ENCODE measurements at regions of chr5 and their contacts with region 1.

Region 1: DNA sequence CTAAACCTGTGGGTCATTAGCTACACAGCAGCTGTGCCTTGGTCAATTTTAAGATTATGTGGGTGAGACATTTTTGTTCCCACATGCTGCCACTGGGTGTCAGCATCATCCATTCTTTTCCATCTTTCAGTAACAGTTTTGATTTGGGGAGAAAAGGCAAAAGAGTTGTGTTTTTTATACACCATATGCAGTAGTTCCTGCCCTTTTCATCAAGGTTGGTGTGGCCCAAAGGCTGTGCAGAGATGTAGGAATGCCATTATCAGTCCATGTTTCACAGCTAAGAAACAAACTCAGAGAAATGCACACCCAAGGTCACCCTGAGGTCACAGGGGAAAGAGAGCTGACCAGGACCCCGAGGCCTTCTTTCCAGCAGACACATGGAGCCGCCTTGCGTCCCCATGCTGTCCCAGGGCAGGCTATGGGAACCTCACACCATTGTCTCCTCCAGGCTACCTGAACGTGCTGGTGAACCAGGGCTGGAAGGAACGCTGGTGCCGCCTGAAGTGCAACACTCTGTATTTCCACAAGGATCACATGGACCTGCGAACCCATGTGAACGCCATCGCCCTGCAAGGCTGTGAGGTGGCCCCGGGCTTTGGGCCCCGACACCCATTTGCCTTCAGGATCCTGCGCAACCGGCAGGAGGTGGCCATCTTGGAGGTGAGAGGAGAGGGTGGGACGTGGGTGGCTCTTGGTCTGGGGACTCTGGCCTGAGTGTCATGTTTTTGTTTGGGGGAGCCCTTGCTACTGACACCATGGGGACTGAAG is 27.8 kb upstream of the GRPEL2 start:
- DNase-seq: peak in 4 of 5 donors; percentile 52 to 66 (median 56)
- H3K4me3 ChIP-seq: no peak overlapping the region
- H3K4me3 Mint-ChIP-seq: no peak overlapping the region
- H3K27ac ChIP-seq: no peak overlapping the region
- H3K27ac Mint-ChIP-seq: no peak overlapping the region
- H3K4me1 ChIP-seq: no peaks in the 10 kb centered on the region
- H3K4me1 Mint-ChIP-seq: peaks cover 0 to 3% (median 1%) of the 10 kb centered on the region in 4 donors
- H3K27me3 ChIP-seq: no peaks in the 10 kb centered on the region
- H3K27me3 Mint-ChIP-seq: no peaks in the 10 kb centered on the region

Region 2: GRCh38 chr5:149357370-149358293 is 40.2 kb after region 1 on chr5 and contains the start of gene PCYOX1L:
- CTCF ChIA-PET with region 1: interaction called, 564 read pairs
- POLR2A ChIA-PET with region 1: interaction called, 5 read pairs
- intact Hi-C with region 1: no loop called
- DNase-seq: peak; percentile 91 to 97 (median 95)
- H3K4me3 ChIP-seq: peak within 1 kb of the TSS; percentile 70 to 82
- H3K4me3 Mint-ChIP-seq: peak within 1 kb of the TSS; percentile 94 to 98 (median 95)
- H3K27ac ChIP-seq: peak within 1 kb of the TSS; percentile 75
- H3K27ac Mint-ChIP-seq: peak within 1 kb of the TSS; percentile 92 to 98 (median 96)
- H3K4me1 ChIP-seq: peaks cover 71% of the 10 kb centered on the region
- H3K4me1 Mint-ChIP-seq: peaks cover 46 to 83% (median 63%) of the 10 kb centered on the region in 4 donors
- H3K27me3 ChIP-seq: no peaks in the 10 kb centered on the region
- H3K27me3 Mint-ChIP-seq: no peaks in the 10 kb centered on the region
- total RNA-seq, gene PCYOX1L: 40.4 to 43.9 TPM

Region 3: DNA sequence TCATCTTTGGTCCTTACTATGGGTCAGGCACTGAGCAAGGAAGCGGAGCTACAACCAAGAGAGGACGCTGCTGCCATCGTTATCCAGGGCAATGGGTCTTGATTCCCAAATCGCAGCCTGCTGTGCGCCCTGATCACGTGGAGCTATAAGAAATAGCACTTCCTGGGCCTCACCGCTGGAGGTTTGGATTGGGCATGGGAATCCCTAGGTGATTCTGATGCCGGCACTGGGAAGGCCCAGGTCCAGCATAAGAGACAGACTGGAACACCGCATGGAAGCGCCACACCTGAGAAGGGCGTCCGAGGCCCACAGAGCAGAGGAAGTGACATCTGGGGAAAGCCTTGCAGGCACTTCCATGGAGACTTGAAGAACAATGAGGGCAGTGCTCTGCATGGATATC is 58.6 kb after region 1 on chr5:
- CTCF ChIA-PET with region 1: interaction called, 564 read pairs
- POLR2A ChIA-PET with region 1: interaction called, 5 read pairs
- intact Hi-C with region 1: loop called (anchors 1 kb)
- DNase-seq: no peak
- H3K4me3 ChIP-seq: no peak overlapping the region
- H3K4me3 Mint-ChIP-seq: no peak overlapping the region
- H3K27ac ChIP-seq: no peak overlapping the region
- H3K27ac Mint-ChIP-seq: peak overlapping the region in 1 of 7 donors; percentile 11
- H3K4me1 ChIP-seq: no peaks in the 10 kb centered on the region
- H3K4me1 Mint-ChIP-seq: peaks cover 3 to 6% (median 5%) of the 10 kb centered on the region in 4 donors
- H3K27me3 ChIP-seq: no peaks in the 10 kb centered on the region
- H3K27me3 Mint-ChIP-seq: peaks cover 0 to 2% of the 10 kb centered on the region in 2 donors

Region 4: GRCh38 chr5:149381987-149382340 is 64.5 kb after region 1 on chr5:
- CTCF ChIA-PET with region 1: interaction called, 20 read pairs
- POLR2A ChIA-PET with region 1: no interaction called
- intact Hi-C with region 1: no loop called
- DNase-seq: peak; percentile 50 to 56 (median 54)
- H3K4me3 ChIP-seq: no peak overlapping the region
- H3K4me3 Mint-ChIP-seq: no peak overlapping the region
- H3K27ac ChIP-seq: no peak overlapping the region
- H3K27ac Mint-ChIP-seq: peak overlapping the region in 3 of 7 donors; percentile 43 to 58 (median 53)
- H3K4me1 ChIP-seq: no peaks in the 10 kb centered on the region
- H3K4me1 Mint-ChIP-seq: peaks cover 0 to 4% (median 1%) of the 10 kb centered on the region in 4 donors
- H3K27me3 ChIP-seq: no peaks in the 10 kb centered on the region
- H3K27me3 Mint-ChIP-seq: peaks cover 3 to 4% of the 10 kb centered on the region in 2 donors

Region 5: GRCh38 chr5:149434162-149435014 is 116.9 kb after region 1 on chr5:
- CTCF ChIA-PET with region 1: interaction called, 71 read pairs
- POLR2A ChIA-PET with region 1: no interaction called
- intact Hi-C with region 1: loop called (anchors 1 kb)
- DNase-seq: peak in 4 of 5 donors; percentile 34 to 42 (median 38)
- H3K4me3 ChIP-seq: no peak overlapping the region
- H3K4me3 Mint-ChIP-seq: no peak overlapping the region
- H3K27ac ChIP-seq: no peak overlapping the region
- H3K27ac Mint-ChIP-seq: no peak overlapping the region
- H3K4me1 ChIP-seq: peaks cover 3% of the 10 kb centered on the region
- H3K4me1 Mint-ChIP-seq: peaks cover 0 to 11% (median 6%) of the 10 kb centered on the region in 4 donors
- H3K27me3 ChIP-seq: no peaks in the 10 kb centered on the region
- H3K27me3 Mint-ChIP-seq: no peaks in the 10 kb centered on the region

Region 6: GRCh38 chr5:149656576-149657182 is 339.2 kb after region 1 on chr5:
- CTCF ChIA-PET with region 1: no interaction called
- POLR2A ChIA-PET with region 1: no interaction called
- intact Hi-C with region 1: no loop called
- DNase-seq: no peak
- H3K4me3 ChIP-seq: no peak overlapping the region
- H3K4me3 Mint-ChIP-seq: no peak overlapping the region
- H3K27ac ChIP-seq: no peak overlapping the region
- H3K27ac Mint-ChIP-seq: no peak overlapping the region
- H3K4me1 ChIP-seq: no peaks in the 10 kb centered on the region
- H3K4me1 Mint-ChIP-seq: no peaks in the 10 kb centered on the region
- H3K27me3 ChIP-seq: peaks cover 6% of the 10 kb centered on the region
- H3K27me3 Mint-ChIP-seq: peaks cover 3 to 8% of the 10 kb centered on the region in 2 donors